Cardiac septum (tissue), 1 donor: ENCODE measurements at regions of chr12 and their contacts with region 1.

Region 1: DNA sequence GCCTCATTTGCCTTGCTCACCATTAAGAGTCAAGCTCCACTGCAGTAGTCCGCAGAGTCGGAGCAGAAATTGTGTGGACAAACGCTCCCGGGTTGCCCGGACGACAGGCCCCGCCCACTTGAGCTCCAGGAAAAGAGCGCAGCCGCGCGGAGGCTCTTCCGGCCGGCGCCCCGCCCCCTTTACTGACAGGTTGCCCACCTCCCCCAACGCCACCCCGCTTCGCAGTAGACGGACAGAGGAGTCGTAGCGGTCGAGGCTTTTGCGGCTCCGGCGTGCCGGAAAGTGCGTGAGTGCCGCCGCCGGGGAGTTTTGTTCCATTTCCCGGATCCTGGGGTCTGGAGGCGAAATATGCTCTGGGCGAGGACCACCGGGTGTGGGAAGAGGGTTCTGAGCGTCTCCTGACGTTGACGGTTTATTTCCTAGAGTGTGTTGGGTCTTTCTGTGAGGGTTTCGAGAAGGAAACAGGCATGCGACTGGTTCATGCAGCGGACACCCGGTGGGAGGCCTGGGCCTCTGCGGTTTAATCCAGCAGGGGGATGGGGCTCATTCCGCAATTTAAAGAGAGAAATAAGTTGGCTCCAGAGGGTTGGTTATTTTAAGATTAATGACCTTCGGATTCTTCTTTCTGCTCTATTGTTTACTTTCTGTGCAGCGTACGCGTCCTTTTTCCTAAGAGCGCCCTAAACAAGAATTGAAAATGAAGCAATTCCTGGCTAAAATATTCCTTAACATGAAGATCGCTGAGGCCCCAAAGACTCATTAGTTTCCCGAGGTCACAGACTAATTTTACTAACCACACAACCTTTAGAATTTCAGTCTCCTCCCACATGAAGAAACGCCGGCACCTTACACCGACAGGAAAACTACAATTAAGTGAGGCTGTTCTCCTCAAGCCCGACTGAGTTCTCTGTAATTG is at the starts of genes DNAI7 and ETFRF1:
- DNase-seq: peak; percentile 97
- total RNA-seq, gene DNAI7: 0.38 TPM
- total RNA-seq, gene ETFRF1: 41.9 TPM

Region 2: GRCh38 chr12:25250744-25251730 is 55.7 kb after region 1 on chr12 and contains the start of gene KRAS:
- intact Hi-C with region 1: loop called (anchors 5 kb)
- DNase-seq: peak; percentile 99
- total RNA-seq, gene KRAS: 11.2 TPM